ENCODE measurements at regions of chr1 and their contacts with region 1.

Region 1: DNA sequence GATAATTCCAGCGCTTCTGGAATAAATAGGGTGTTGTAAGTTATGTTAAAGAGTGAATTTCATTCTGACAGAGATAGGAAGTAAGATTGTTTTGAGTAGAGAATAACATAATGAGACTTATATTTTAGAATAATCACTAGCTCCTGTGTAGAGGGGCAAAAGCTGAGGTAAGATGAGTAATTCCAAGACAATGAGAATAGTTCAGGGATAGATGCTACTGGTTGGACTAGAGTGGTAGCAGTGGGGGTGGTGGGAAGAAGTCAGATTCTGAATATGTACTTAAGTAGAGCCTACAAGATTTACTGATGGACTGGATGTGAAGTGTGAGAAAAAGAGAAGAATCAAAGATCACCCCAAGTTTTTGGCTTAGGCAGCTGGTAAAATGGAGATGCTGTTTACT is 23.3 kb upstream of the MOV10 start:
- DNase-seq: no peak
- ATAC-seq: no peak
- H3K4me3 ChIP-seq: no peak overlapping the region
- H3K4me3 Mint-ChIP-seq: no peak overlapping the region
- H3K27ac ChIP-seq: no peak overlapping the region
- H3K27ac Mint-ChIP-seq: peak overlapping the region in 1 of 2 donors; percentile 54
- H3K4me1 ChIP-seq: peaks cover 0 to 7% of the 10 kb centered on the region in 2 experiments
- H3K4me1 Mint-ChIP-seq: peaks cover 16 to 31% (median 26%) of the 10 kb centered on the region in 3 donors
- H3K27me3 ChIP-seq: no peaks in the 10 kb centered on the region
- H3K27me3 Mint-ChIP-seq: no peaks in the 10 kb centered on the region

Region 2: DNA sequence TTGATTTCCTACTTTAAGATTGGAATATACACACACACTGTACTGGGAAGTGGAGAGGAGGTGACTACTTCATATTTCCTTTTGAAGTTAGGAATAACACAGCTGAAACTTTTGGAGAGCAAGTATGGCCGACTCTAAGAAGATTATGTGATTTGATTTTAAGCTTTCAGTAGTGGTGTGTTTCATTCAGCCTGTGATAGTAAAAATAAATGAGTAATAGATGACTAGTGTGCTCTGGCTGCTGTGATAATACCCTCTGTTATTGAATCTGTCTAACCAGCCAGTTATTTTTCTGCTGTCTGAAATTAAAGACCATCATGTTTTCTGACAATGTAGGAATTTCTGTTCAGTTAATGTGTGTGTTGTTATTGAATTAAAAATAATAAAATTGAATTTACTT is 206.9 kb before region 1 on chr1:
- CTCF ChIA-PET with region 1: no interaction called
- POLR2A ChIA-PET with region 1: no interaction called
- DNase-seq: no peak
- ATAC-seq: no peak
- H3K4me3 ChIP-seq: no peak overlapping the region
- H3K4me3 Mint-ChIP-seq: no peak overlapping the region
- H3K27ac ChIP-seq: no peak overlapping the region
- H3K27ac Mint-ChIP-seq: no peak overlapping the region
- H3K4me1 ChIP-seq: no peaks in the 10 kb centered on the region
- H3K4me1 Mint-ChIP-seq: no peaks in the 10 kb centered on the region
- H3K27me3 ChIP-seq: peaks cover 0 to 4% of the 10 kb centered on the region in 2 experiments
- H3K27me3 Mint-ChIP-seq: peaks cover 5 to 12% of the 10 kb centered on the region in 2 donors

Region 3: DNA sequence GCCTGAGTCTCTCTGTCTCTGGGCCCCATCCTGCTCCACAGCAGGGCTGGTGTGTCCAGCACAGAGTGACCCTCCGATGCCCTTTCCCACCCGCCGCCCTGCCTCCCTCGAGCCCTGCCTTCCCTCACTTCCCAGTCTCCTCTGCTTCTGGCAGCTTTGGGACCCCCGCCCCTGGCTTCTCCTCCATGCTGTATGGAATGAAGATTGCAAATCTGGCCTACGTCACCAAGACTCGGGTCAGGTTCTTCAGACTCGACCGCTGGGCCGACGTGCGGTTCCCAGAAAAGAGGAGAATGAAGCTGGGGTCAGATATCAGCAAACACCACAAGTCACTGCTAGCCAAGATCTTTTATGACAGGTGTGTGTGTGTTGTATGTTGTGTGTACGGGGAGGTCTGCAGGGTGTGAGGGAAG is 37.6 kb after region 1 on chr1:
- CTCF ChIA-PET with region 1: interaction called, 3 to 12 read pairs
- POLR2A ChIA-PET with region 1: no interaction called
- DNase-seq: no peak
- ATAC-seq: no peak
- H3K4me3 ChIP-seq: no peak overlapping the region
- H3K4me3 Mint-ChIP-seq: no peak overlapping the region
- H3K27ac ChIP-seq: no peak overlapping the region
- H3K27ac Mint-ChIP-seq: no peak overlapping the region
- H3K4me1 ChIP-seq: no peaks in the 10 kb centered on the region
- H3K4me1 Mint-ChIP-seq: peaks cover 12 to 25% (median 18%) of the 10 kb centered on the region in 3 donors
- H3K27me3 ChIP-seq: no peaks in the 10 kb centered on the region
- H3K27me3 Mint-ChIP-seq: no peaks in the 10 kb centered on the region

Region 4: GRCh38 chr1:112849425-112850033 is 198.3 kb after region 1 on chr1:
- CTCF ChIA-PET with region 1: no interaction called
- POLR2A ChIA-PET with region 1: no interaction called
- DNase-seq: no peak
- ATAC-seq: no peak
- H3K4me3 ChIP-seq: no peak overlapping the region
- H3K4me3 Mint-ChIP-seq: peak overlapping the region in 1 of 3 donors; percentile 52
- H3K27ac ChIP-seq: no peak overlapping the region
- H3K27ac Mint-ChIP-seq: no peak overlapping the region
- H3K4me1 ChIP-seq: peaks cover 0 to 9% of the 10 kb centered on the region in 2 experiments
- H3K4me1 Mint-ChIP-seq: peaks cover 0 to 2% (median 0%) of the 10 kb centered on the region in 3 donors
- H3K27me3 ChIP-seq: peaks cover 4 to 40% of the 10 kb centered on the region in 2 experiments
- H3K27me3 Mint-ChIP-seq: peaks cover 39 to 46% of the 10 kb centered on the region in 2 donors

Region 5: DNA sequence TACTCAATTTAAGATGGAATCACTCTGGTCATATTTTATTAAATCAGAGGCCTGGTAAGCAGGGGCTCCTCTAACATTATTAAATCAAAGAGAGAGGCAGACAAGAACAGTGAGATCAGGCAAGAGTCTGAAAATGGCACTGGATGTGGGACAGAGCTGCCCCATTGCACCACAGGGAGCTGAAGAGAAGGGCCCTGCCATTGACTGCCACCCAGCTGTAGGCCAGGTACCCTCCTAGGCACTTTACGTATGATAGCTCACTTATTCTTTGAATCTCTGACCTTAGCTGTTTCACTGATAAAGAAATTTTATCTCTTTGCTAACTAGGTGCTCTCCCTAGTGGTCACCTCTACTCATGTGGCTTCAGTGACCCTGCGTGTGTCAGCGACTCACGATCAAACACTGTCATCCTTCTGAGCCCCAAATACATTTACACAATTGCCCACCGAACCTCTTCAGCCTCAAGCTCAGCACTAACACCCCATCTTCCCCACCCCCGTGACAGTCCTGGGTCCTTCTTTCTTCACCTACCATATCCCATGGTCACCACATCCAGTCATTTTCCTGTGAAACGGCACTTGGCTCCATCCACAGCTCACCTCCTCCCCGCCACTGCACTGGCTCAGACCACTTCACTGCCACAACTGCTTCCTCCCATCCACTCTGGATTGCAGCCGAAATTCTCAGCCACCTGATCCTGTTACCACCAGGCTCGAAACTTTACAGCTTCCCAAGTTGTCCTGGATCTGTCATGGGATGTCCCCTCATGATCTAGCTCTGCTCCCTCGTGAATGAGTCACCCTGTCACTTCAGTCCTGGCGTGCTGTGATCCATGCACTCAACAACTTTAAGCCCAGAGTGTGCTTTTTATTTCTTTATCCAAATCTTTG is 1599.7 kb after region 1 on chr1:
- CTCF ChIA-PET with region 1: no interaction called
- POLR2A ChIA-PET with region 1: no interaction called
- DNase-seq: no peak
- ATAC-seq: no peak
- H3K4me3 ChIP-seq: no peak overlapping the region
- H3K4me3 Mint-ChIP-seq: no peak overlapping the region
- H3K27ac ChIP-seq: no peak overlapping the region
- H3K27ac Mint-ChIP-seq: no peak overlapping the region
- H3K4me1 ChIP-seq: no peaks in the 10 kb centered on the region
- H3K4me1 Mint-ChIP-seq: peaks cover 0 to 8% (median 5%) of the 10 kb centered on the region in 3 donors
- H3K27me3 ChIP-seq: peaks cover 0 to 2% of the 10 kb centered on the region in 2 experiments
- H3K27me3 Mint-ChIP-seq: peaks cover 0 to 4% of the 10 kb centered on the region in 2 donors

Measured in T-cell (primary cell).